ENCODE measurements at regions of chr3 and their contacts with region 1.

Region 1: GRCh38 chr3:183697610-183698317 is at the start of gene YEATS2:
- DNase-seq: peak; percentile 17 to 87
- H3K4me3 ChIP-seq: peak within 1 kb of the TSS; percentile 59 to 96 (median 94)
- H3K27ac ChIP-seq: peak within 1 kb of the TSS; percentile 98
- H3K4me1 ChIP-seq: peaks cover 0 to 15% (median 3%) of the 10 kb centered on the region in 4 experiments; a peak in 3 of 7 replicates
- H3K27me3 ChIP-seq: no peaks in the 10 kb centered on the region
- CTCF ChIP-seq: no peak
- EP300 ChIP-seq: peak in 1 of 2 experiments; percentile 67; a peak in 1 of 3 replicates
- POLR2A ChIP-seq: peak; percentile 80 to 81
- RAD21 ChIP-seq: no peak; a peak in 1 of 4 replicates
- total RNA-seq, gene YEATS2: 52.6 and 53.7 TPM in 2 replicates

Region 2: DNA sequence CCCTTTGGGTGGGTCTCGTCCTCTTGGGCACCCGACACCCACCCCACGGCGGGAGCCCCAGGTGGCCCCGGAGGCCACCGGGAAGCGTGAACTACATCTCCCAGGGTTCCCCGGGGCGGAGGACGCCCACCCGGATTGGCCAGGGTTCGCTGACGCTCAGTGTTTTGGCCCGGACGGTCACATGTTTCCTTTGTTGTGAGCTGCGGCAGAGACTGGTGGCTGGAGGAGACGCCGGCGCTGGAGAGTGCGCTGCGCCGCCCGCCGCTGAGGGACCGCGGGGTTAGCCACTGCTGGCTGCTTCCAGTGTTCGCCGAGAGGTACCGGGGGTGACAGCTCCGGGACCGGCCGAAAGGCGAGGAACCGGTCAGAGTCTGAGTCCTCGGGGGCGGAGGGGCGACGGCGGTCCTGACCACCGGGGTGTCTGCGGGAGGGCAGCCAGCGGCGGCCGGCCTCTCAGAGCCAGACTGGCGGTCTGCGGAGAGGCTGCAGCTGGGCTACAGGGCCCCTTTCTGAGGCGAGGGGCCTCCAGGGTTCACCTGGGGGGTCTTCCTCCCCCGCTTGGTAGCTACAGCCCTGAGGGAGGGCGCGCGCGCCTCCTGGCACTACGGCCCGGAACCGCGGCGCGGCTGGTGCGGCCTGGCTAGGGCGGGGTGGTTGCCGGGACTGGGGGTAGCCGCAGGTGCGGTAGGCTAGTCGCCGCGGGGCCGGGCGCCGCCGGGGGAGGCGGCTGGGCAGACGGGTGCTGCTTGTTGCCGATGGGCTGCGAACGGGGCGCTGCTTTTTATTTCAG is 62.1 kb before region 1 on chr3 and contains the start of gene KLHL24:
- CTCF ChIA-PET with region 1: no interaction called
- POLR2A ChIA-PET with region 1: interaction called, 33 read pairs
- DNase-seq: peak; percentile 64 to 92
- H3K4me3 ChIP-seq: peak within 1 kb of the TSS; percentile 77 to 96 (median 82)
- H3K27ac ChIP-seq: peak within 1 kb of the TSS; percentile 82
- H3K4me1 ChIP-seq: no peaks in the 10 kb centered on the region
- H3K27me3 ChIP-seq: no peaks in the 10 kb centered on the region
- CTCF ChIP-seq: no peak
- EP300 ChIP-seq: no peak
- POLR2A ChIP-seq: peak; percentile 84 to 93
- RAD21 ChIP-seq: no peak
- total RNA-seq, gene KLHL24: 33.5 and 36.2 TPM in 2 replicates

Region 3: GRCh38 chr3:183710231-183710630 is 12.5 kb after region 1 on chr3:
- CTCF ChIA-PET with region 1: no interaction called
- POLR2A ChIA-PET with region 1: interaction called, 14 read pairs
- DNase-seq: no peak
- H3K4me3 ChIP-seq: no peak overlapping the region
- H3K27ac ChIP-seq: no peak overlapping the region
- H3K4me1 ChIP-seq: no peaks in the 10 kb centered on the region
- H3K27me3 ChIP-seq: no peaks in the 10 kb centered on the region
- CTCF ChIP-seq: no peak
- EP300 ChIP-seq: no peak
- POLR2A ChIP-seq: no peak
- RAD21 ChIP-seq: no peak

Region 4: DNA sequence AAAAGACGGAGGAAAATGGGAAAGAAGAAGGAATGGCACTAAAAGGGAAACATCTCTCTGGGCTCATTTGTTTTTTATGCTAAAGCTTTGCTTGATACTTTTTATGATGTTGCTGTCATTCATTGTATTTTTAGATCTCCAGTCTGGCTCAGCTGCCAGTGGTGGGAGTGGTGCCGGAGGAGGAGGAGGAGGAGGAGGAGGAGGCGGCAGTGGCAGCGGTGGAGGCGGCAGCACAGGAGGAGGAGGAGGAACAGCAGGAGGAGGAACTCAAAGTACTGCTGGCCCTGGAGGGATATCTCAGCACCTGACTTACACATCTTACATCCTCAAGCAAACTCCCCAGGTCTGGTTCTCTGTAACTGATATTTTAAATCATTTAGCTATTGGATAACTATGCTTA is 78.0 kb after region 1 on chr3:
- CTCF ChIA-PET with region 1: no interaction called
- POLR2A ChIA-PET with region 1: no interaction called
- DNase-seq: no peak
- H3K4me3 ChIP-seq: no peak overlapping the region
- H3K27ac ChIP-seq: no peak overlapping the region
- H3K4me1 ChIP-seq: no peaks in the 10 kb centered on the region
- H3K27me3 ChIP-seq: no peaks in the 10 kb centered on the region
- CTCF ChIP-seq: no peak
- EP300 ChIP-seq: no peak
- POLR2A ChIP-seq: no peak
- RAD21 ChIP-seq: no peak

Measured in H1 (cell line).